A549 (cell line): ENCODE measurements at regions of chr1 and their contacts with region 1.

Region 1: GRCh38 chr1:150561974-150562445 is 12.8 kb downstream of the ADAMTSL4 start:
- DNase-seq: peak; percentile 86 to 89
- ATAC-seq: peak; percentile 62 to 72
- H3K4me3 ChIP-seq: peak overlapping the region; percentile 46
- H3K27ac ChIP-seq: peak overlapping the region; percentile 97 to 99
- H3K4me1 ChIP-seq: peaks cover 54% of the 10 kb centered on the region
- CTCF ChIP-seq: no peak
- EP300 ChIP-seq: peak in 1 of 2 experiments; percentile 44; a peak in 1 of 5 replicates
- POLR2A ChIP-seq: peak; percentile 30
- RAD21 ChIP-seq: no peak

Region 2: GRCh38 chr1:150410582-150411101 is 151.4 kb before region 1 on chr1:
- CTCF ChIA-PET with region 1: no interaction called
- POLR2A ChIA-PET with region 1: no interaction called
- DNase-seq: peak in 1 of 2 experiments; percentile 14
- ATAC-seq: peak; percentile 43 to 54; a peak in 4 of 6 replicates
- H3K4me3 ChIP-seq: no peak overlapping the region
- H3K27ac ChIP-seq: 0 out of 6 replicates have a peak overlapping the region, but pooled peaks of 1 of the 2 experiments have one; percentile 11
- H3K4me1 ChIP-seq: peaks cover 52% of the 10 kb centered on the region
- CTCF ChIP-seq: no peak
- EP300 ChIP-seq: no peak
- POLR2A ChIP-seq: no peak
- RAD21 ChIP-seq: no peak

Region 3: GRCh38 chr1:150535511-150536281 is 26.3 kb before region 1 on chr1:
- CTCF ChIA-PET with region 1: interaction called, 36 read pairs
- POLR2A ChIA-PET with region 1: interaction called, 4 read pairs
- DNase-seq: peak in 1 of 2 experiments; percentile 50
- ATAC-seq: no peak
- H3K4me3 ChIP-seq: no peak overlapping the region
- H3K27ac ChIP-seq: peak overlapping the region in 1 of 2 experiments; percentile 34; a peak in 1 of 6 replicates
- H3K4me1 ChIP-seq: peaks cover 37% of the 10 kb centered on the region
- CTCF ChIP-seq: no peak
- EP300 ChIP-seq: no peak
- POLR2A ChIP-seq: no peak
- RAD21 ChIP-seq: no peak

Region 4: GRCh38 chr1:150572918-150573647 is 11.1 kb after region 1 on chr1:
- CTCF ChIA-PET with region 1: interaction called, 140 read pairs
- POLR2A ChIA-PET with region 1: interaction called, 201 read pairs
- DNase-seq: no peak
- ATAC-seq: no peak
- H3K4me3 ChIP-seq: no peak overlapping the region
- H3K27ac ChIP-seq: peak overlapping the region; percentile 12 to 45; a peak in 3 of 6 replicates
- H3K4me1 ChIP-seq: peaks cover 82% of the 10 kb centered on the region
- CTCF ChIP-seq: no peak
- EP300 ChIP-seq: no peak
- POLR2A ChIP-seq: no peak
- RAD21 ChIP-seq: no peak

Region 5: GRCh38 chr1:150613061-150613920 is 51.3 kb after region 1 on chr1:
- CTCF ChIA-PET with region 1: interaction called, 210 read pairs
- POLR2A ChIA-PET with region 1: interaction called, 16 read pairs
- DNase-seq: peak; percentile 66 to 90
- ATAC-seq: peak; percentile 63 to 65
- H3K4me3 ChIP-seq: peak overlapping the region; percentile 13; the same call in 1 of the 3 replicates
- H3K27ac ChIP-seq: peak overlapping the region; percentile 89 to 95
- H3K4me1 ChIP-seq: peaks cover 60% of the 10 kb centered on the region
- CTCF ChIP-seq: no peak
- EP300 ChIP-seq: peak; percentile 66; a peak in 2 of 5 replicates
- POLR2A ChIP-seq: no peak
- RAD21 ChIP-seq: no peak

Region 6: DNA sequence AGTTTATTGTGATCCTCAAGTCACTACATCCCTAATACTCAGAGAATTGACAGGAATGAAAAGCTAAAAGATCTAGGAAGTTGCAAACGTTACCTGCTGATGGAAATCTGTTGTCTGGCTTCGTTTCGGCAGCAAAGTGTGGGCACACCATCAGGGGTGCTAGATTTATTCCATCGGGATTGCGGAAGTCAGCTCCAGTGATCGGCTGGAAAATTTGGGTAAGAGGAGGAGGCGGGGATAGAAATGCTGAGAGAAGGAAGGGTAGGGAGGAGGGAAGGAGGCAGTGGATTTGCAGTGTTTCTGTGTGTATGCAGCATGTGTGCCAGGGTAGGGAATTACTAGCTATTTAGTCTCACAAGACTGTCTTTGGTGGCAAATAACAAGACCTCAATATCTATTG is 246.1 kb after region 1 on chr1 and contains the start of gene CTSK:
- CTCF ChIA-PET with region 1: interaction called, 36 read pairs
- POLR2A ChIA-PET with region 1: interaction called, 4 read pairs
- DNase-seq: no peak
- ATAC-seq: no peak
- H3K4me3 ChIP-seq: no peak within 1 kb of the TSS
- H3K27ac ChIP-seq: no peak within 1 kb of the TSS
- H3K4me1 ChIP-seq: no peaks in the 10 kb centered on the region
- CTCF ChIP-seq: no peak
- EP300 ChIP-seq: no peak
- POLR2A ChIP-seq: no peak
- RAD21 ChIP-seq: no peak
- polyA plus RNA-seq, gene CTSK: 5.0 and 6.7 TPM in 2 replicates